Aorta (tissue), 5 donors: ENCODE measurements at regions of chr19 and their contacts with region 1.

Region 1: DNA sequence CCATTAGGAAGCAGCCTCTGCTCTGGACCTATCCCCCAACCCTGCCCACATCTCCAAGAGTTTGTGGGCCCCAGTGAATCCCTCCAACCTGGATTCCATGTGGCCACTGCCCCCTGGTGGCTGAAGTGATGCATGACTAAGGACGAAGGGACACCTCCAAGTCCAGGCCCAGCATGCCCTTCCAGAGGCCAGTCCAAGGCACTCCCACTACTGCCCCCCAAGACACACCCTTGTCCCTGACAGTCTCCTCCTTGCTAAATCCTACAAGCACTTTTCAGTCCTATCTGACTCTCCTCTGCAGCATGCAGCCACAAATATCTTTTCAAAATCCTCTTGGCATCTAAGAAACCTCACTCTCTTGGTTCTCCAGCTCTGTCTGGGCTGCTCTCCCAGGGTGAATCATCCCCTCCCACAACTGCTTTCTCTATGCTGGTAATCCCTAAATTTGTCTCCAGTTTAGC is 33.0 kb downstream of the DEDD2 start:
- DNase-seq: peak; percentile 85 to 90
- ATAC-seq: peak; percentile 88
- H3K4me3 ChIP-seq: no peak overlapping the region
- H3K27ac ChIP-seq: no peak overlapping the region
- H3K4me1 ChIP-seq: no peaks in the 10 kb centered on the region
- H3K27me3 ChIP-seq: no peaks in the 10 kb centered on the region

Region 2: GRCh38 chr19:42108527-42109389 is 75.7 kb before region 1 on chr19:
- intact Hi-C with region 1: loop called in 1 of 2 experiments (anchors 1 kb)
- DNase-seq: peak; percentile 90 to 92
- ATAC-seq: peak; percentile 86
- H3K4me3 ChIP-seq: no peak overlapping the region
- H3K27ac ChIP-seq: no peak overlapping the region
- H3K4me1 ChIP-seq: no peaks in the 10 kb centered on the region
- H3K27me3 ChIP-seq: no peaks in the 10 kb centered on the region